ENCODE measurements at regions of chr16 and their contacts with region 1.

Region 1: GRCh38 chr16:29805378-29806098 is 791 bp upstream of the MAZ start:
- DNase-seq: peak; percentile 99
- ATAC-seq: peak; percentile 63
- H3K4me3 Mint-ChIP-seq: peak overlapping the region; percentile 100
- H3K27ac Mint-ChIP-seq: peak overlapping the region; percentile 96
- H3K4me1 Mint-ChIP-seq: peaks cover 30% of the 10 kb centered on the region
- H3K27me3 Mint-ChIP-seq: no peaks in the 10 kb centered on the region

Region 2: DNA sequence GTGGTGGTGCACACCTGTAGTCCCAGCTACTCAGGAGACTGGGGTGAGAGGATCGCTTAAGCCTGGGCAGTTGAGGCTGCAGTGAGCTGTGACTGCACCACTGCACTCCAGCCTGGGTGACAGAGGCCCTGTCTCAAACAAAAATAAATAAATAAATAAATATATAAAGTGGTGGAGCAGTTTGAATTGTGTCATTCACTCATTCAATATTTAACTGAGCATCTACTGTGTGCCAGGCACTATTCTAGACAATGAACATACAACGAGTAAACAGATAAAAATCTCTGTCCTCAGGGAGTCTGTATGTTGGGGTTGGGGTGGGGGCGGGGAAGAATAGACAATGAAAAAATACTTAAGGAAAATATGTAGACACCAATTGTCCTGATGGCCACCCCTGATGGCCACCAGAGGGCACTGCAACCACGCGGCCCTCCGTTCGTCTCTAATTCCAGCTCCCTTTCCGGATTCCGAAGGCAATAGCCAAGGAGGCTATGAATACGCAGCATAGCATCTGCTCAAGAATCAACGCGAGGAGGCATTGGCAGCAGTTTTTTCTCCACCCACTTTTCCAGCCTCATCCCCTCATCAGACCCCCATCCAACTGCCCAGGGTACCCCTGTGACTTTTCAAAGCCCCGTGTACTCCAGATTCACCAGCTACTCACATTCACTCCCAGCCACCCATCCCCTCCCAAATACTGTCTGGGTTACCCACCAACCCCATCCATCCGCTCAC is 105.1 kb before region 1 on chr16:
- POLR2A ChIA-PET with region 1: interaction called, 13 read pairs
- DNase-seq: peak; percentile 78
- ATAC-seq: peak; percentile 20
- H3K4me3 Mint-ChIP-seq: peak overlapping the region; percentile 62
- H3K27ac Mint-ChIP-seq: peak overlapping the region; percentile 75
- H3K4me1 Mint-ChIP-seq: peaks cover 29% of the 10 kb centered on the region
- H3K27me3 Mint-ChIP-seq: no peaks in the 10 kb centered on the region

Region 3: DNA sequence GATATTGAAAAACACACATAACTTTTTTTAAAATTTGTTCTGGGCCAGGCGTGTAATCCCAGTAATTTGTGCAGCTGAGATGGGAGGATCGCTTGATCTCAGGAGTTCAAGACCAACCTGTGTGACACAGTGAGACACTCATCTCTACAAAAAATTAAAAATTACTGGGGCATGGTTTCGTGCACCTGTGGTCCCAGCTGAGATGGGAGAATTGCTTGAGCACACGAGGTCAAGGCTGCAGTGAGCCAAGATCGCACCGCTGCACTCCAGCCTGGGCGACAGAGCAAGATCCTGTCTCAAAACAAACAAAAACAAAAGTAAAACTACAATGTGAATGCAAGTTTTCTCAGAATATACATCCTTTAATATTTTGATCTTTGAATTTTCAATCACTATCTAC is 74.9 kb before region 1 on chr16:
- POLR2A ChIA-PET with region 1: no interaction called
- DNase-seq: no peak
- ATAC-seq: no peak
- H3K4me3 Mint-ChIP-seq: no peak overlapping the region
- H3K27ac Mint-ChIP-seq: no peak overlapping the region
- H3K4me1 Mint-ChIP-seq: peaks cover 15% of the 10 kb centered on the region
- H3K27me3 Mint-ChIP-seq: peaks cover 12% of the 10 kb centered on the region

Region 4: DNA sequence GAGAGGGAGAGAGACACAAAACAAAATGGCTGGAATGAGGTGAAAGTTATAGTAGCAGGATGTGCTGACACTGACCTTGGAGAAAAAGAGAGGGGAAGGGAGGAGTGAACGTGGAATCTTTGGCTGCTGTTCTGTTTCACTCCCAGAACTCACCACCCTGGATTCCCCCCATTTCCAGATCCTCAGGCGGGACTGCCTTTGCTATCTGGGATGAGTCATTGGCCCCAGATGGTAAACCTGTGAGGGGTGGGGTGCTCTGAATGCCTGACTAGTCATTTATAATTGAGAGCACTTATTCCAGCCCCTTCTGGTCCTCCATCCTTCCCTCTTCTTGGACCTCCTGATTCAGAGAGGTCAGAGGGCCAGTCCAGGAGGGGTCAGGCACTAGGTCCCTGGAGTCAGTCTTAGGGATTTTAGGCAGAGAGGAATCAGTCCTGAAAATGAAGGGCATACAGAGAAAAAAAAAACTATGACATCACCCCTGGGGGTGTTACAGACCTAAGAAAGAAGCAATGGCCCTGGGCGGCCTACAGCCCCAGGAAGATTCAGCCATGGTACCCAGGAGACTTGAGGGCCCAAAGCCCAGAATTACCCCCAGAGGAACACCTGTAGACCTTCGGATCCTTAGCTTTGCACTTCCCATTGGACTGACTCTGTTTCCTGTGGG is 29.7 kb before region 1 on chr16:
- POLR2A ChIA-PET with region 1: no interaction called
- DNase-seq: no peak
- ATAC-seq: no peak
- H3K4me3 Mint-ChIP-seq: no peak overlapping the region
- H3K27ac Mint-ChIP-seq: no peak overlapping the region
- H3K4me1 Mint-ChIP-seq: peaks cover 2% of the 10 kb centered on the region
- H3K27me3 Mint-ChIP-seq: peaks cover 6% of the 10 kb centered on the region

Region 5: DNA sequence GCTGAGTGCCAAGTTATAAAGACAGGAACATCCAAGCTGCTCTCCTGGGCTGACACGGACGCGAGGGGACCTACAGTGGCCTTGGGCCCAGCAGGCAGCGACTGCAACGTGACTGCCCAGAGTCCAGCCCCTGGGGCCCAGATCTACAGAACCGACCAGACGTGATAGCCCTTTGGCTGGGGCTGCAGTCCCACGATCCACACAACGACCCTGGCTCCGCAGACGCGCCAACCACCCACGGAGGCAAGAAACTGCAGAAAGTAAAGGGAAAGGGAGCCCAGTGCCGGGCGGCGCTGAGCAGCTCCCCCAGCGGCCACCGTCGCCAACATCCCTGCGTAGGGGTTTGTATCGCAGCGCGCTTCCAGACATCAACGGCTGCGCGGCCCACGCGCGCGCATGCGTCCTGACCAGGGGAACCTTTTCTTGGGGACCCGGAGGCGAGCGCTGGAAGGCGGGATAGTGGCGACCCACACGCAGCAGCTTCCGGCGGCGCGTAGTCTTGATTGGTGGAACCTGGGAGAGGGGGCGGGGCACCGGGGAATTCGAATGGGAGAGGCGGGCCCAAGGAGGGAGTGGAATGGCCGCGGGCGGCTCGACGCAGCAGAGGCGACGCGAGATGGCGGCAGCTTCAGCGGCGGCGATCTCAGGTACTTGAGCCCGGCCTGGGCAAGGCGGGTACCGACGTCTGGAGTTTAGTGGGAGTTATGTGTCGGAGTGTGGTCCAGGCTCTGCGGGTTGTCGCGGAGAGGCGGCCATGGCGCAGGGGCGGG is 15.2 kb before region 1 on chr16 and contains the start of gene KIF22:
- POLR2A ChIA-PET with region 1: interaction called, 165 read pairs
- DNase-seq: peak; percentile 100
- ATAC-seq: peak; percentile 97
- H3K4me3 Mint-ChIP-seq: peak within 1 kb of the TSS; percentile 99
- H3K27ac Mint-ChIP-seq: peak within 1 kb of the TSS; percentile 98
- H3K4me1 Mint-ChIP-seq: peaks cover 33% of the 10 kb centered on the region
- H3K27me3 Mint-ChIP-seq: no peaks in the 10 kb centered on the region
- total RNA-seq, gene KIF22: 191 to 199 TPM

Region 6: GRCh38 chr16:29848420-29849297 is 43.1 kb after region 1 on chr16:
- POLR2A ChIA-PET with region 1: interaction called, 25 read pairs
- DNase-seq: peak; percentile 89
- ATAC-seq: peak; percentile 92
- H3K4me3 Mint-ChIP-seq: no peak overlapping the region
- H3K27ac Mint-ChIP-seq: no peak overlapping the region
- H3K4me1 Mint-ChIP-seq: peaks cover 4% of the 10 kb centered on the region
- H3K27me3 Mint-ChIP-seq: no peaks in the 10 kb centered on the region

Region 7: GRCh38 chr16:29877266-29877961 is 71.9 kb after region 1 on chr16:
- POLR2A ChIA-PET with region 1: no interaction called
- DNase-seq: peak; percentile 48
- ATAC-seq: peak; percentile 60
- H3K4me3 Mint-ChIP-seq: peak overlapping the region; percentile 64
- H3K27ac Mint-ChIP-seq: no peak overlapping the region
- H3K4me1 Mint-ChIP-seq: peaks cover 11% of the 10 kb centered on the region
- H3K27me3 Mint-ChIP-seq: peaks cover 28% of the 10 kb centered on the region

Region 8: DNA sequence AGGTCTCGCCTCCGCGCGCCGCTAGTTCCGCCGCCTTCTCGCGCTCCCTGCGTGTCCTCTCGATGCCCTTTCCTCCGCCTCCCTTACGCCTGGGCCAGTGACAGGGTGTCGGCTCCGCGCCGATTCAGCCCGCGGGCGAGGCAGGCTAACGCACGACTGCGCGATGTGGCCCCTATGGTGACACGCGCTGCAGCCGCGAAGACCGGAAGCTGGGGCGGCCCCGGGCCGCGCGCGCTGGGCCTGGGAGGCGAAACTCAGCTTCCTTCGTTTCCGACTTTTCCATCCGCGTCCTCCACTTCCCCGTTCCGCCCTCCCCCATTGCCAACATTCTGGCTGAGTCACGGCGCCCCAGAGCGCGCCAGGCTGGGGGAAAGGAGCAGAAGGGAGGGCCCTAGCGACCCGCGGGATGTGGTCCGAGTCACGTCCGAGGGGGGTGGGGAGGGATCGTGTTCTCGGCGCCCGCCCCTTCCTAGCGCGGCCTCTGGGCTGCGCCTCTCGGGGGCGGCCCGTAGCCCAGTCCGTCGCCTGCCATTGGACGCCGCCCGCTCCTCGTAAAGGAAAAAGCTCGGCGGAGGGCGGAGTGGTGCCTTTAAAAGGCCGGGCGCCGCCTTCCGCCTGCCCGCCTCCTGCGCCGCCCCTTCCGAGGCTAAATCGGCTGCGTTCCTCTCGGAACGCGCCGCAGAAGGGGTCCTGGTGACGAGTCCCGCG is 259.8 kb after region 1 on chr16 and contains the start of gene ALDOA:
- POLR2A ChIA-PET with region 1: interaction called, 12 read pairs
- DNase-seq: peak; percentile 95
- ATAC-seq: peak; percentile 85
- H3K4me3 Mint-ChIP-seq: peak within 1 kb of the TSS; percentile 100
- H3K27ac Mint-ChIP-seq: peak within 1 kb of the TSS; percentile 98
- H3K4me1 Mint-ChIP-seq: peaks cover 22% of the 10 kb centered on the region
- H3K27me3 Mint-ChIP-seq: no peaks in the 10 kb centered on the region
- total RNA-seq, gene ALDOA: 1,486 to 1,632 TPM

Measured in activated naive CD8-positive, alpha-beta T cell treated with anti-CD3 and anti-CD28 coated beads, Interleukin-2, amount 10 ng/mL, durations not matched to agents 7 days and 5 days (primary cell).